ENCODE measurements at regions of chr3 and their contacts with region 1.

Region 1: DNA sequence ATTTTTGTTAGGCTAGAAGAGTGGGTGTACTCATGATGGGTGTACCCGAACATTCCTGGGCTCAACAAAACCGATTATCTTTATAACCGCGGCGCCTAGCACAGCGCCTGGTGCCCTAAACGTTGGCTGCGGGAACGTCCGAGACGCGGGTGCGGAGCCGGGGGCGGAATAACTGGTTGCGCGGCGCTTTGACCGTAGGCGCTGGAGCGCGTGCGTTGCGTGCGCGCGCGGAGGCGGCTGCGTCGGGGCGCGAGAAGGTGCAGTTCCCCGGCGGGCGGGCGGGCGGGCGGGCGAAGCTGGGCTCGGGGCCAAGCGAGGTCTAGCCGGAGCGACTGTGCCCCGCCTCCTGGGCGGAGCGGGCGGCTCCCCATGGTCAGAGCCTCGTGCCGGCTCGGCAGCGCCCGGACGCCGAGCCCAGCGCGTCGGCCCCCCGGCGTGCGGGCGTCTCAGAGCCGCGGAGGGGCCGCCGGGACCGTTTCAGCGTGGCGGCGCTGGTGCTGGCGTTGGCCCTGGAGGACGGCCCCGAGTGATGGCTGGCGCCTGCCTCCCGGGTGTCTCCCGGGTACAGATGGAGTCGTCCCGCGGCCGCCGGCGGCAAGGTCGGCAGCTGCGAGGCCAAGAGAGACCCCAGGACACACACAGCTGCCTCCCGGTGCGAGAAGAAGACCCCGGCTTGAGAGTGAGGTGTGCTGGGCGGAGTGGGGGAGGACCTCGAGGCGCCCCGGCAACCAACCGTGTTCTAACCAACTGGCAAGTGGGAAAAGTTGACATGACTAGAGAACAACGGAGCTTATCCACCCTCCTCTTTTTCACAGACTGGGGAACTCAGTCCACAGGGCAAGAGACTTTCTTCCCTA is at the start of gene PLAAT1:
- DNase-seq: peak; percentile 61 to 79
- ATAC-seq: peak; percentile 69 to 79
- H3K4me3 ChIP-seq: peak within 1 kb of the TSS; percentile 65 to 76 (median 72)
- H3K27ac ChIP-seq: peak within 1 kb of the TSS; percentile 96 to 98 (median 97)
- H3K4me1 ChIP-seq: peaks cover 16 to 31% of the 10 kb centered on the region in 2 donors
- H3K27me3 ChIP-seq: no peaks in the 10 kb centered on the region
- CTCF ChIP-seq: no peak
- POLR2A ChIP-seq: peak; percentile 82 to 87
- total RNA-seq, gene PLAAT1: 6.8 to 25.0 (median 18.8) TPM

Region 2: DNA sequence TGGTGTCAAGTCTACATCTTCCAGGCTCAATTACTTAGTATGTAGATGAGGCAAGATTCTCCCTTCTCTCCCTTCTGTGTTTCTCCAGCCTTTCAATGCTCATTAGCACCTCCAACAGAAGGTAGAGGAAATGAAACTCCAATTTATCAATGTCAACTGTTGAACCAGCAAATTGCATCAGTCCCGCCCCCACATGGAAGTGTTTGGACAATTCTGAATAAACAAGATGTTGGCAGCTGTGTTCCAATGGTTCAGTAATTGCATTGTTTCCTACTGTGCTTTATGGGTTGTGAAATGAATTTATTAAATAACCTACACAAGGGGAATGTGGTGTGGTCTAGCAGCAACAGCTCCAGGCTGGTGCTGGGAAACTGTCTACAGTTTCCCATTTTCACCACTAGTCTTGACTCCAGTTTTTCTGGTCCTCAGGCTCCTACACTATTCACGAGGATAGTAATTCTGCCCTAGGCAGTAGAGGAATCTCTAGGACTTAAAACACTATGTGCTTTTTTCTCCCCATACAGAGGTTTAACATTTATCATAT is 415.3 kb before region 1 on chr3:
- in situ Hi-C with region 1: no loop called
- intact Hi-C with region 1: loop called (anchors 2 kb)
- DNase-seq: no peak
- ATAC-seq: no peak
- H3K4me3 ChIP-seq: no peak overlapping the region
- H3K27ac ChIP-seq: no peak overlapping the region
- H3K4me1 ChIP-seq: peaks cover 23 to 27% of the 10 kb centered on the region in 2 donors
- H3K27me3 ChIP-seq: no peaks in the 10 kb centered on the region
- CTCF ChIP-seq: no peak
- POLR2A ChIP-seq: no peak

Region 3: DNA sequence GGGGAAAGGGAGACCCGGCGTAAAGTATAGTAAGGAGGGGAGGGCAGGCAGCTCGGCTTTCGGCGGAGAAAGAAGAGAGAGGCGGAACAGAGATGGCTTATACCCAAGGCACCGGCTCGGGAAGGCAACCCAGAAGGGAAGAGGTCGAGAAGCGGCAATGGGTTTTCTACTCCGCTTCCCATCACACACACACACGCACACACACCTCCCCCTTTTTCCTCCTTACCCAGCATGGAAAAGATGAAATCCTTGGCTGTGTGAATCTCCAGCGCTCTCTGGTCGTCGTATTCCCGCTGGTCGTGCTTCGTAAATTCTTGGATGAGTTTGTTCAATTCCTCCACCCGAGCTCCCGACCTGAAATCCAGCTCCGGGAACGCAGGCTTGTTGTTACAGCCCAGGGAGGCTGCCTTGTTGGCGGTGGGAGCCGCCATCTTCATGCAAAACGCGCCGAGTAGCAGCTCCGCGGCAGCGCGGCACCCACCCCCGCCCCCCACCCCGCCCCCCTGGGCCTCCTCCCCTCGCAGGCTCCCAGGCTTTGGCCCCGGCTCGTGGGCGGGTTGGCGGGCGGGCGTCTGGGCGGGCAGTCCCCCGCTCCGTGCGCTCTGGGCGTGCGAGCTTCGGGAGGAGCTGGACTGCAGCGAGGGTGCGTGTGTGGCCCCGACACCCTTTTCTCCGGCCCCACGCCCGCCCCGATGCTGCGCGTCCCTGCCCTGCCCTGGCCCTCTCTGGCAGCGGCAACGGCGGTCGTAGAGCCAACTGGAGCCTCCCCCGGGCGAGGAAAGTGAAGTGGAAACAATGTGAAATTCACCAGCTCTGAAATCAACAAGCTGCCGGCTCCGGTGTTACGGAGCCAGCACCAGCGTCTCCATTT is 323.4 kb before region 1 on chr3 and contains the start of gene MB21D2:
- in situ Hi-C with region 1: no loop called
- intact Hi-C with region 1: loop called (anchors 1 kb)
- DNase-seq: peak; percentile 34 to 45
- ATAC-seq: peak; percentile 75 to 80
- H3K4me3 ChIP-seq: peak within 1 kb of the TSS; percentile 74 to 92 (median 82)
- H3K27ac ChIP-seq: peak within 1 kb of the TSS; percentile 88 to 94 (median 90)
- H3K4me1 ChIP-seq: peaks cover 11 to 24% of the 10 kb centered on the region in 2 donors
- H3K27me3 ChIP-seq: no peaks in the 10 kb centered on the region
- CTCF ChIP-seq: no peak
- POLR2A ChIP-seq: peak; percentile 38 to 59
- total RNA-seq, gene MB21D2: 1.5 to 3.8 (median 2.7) TPM

Region 4: DNA sequence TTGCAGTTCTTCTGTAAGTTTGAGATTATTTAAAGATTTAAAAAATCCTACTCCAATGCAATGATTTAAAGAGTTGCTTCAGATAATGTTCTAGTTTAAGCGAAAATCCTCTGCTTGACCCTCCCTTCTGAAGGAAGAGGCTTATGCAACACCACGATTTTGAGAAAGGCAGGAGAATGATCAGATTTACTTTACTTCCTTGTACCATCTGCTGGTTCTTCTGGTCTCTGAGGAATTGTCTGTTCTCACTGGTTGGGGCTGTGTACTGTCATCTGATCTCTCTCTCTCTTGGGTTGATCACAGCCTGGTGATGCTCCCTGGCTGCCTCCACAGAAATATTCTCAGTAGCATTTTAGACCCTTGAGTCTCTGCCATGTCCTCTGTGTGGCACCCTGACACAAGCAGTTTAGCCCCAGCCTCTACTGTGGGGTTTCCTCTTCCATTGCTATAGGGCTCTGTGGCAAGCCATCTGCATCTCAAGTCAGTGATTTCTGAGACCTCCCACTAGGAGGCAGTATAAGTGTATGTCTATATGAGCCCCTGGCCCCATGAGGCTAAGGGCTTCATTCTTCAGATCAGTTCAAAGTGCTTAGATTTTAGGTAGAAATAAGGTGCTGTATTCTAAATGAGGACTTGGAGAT is 50.8 kb before region 1 on chr3:
- in situ Hi-C with region 1: no loop called
- intact Hi-C with region 1: loop called (anchors 5 kb)
- DNase-seq: peak in 1 of 2 donors; percentile 26
- ATAC-seq: peak; percentile 58 to 95
- H3K4me3 ChIP-seq: no peak overlapping the region
- H3K27ac ChIP-seq: no peak overlapping the region
- H3K4me1 ChIP-seq: peaks cover 0 to 5% of the 10 kb centered on the region in 2 donors
- H3K27me3 ChIP-seq: no peaks in the 10 kb centered on the region
- CTCF ChIP-seq: peak; percentile 32 to 55 (median 37)
- POLR2A ChIP-seq: no peak

Region 5: DNA sequence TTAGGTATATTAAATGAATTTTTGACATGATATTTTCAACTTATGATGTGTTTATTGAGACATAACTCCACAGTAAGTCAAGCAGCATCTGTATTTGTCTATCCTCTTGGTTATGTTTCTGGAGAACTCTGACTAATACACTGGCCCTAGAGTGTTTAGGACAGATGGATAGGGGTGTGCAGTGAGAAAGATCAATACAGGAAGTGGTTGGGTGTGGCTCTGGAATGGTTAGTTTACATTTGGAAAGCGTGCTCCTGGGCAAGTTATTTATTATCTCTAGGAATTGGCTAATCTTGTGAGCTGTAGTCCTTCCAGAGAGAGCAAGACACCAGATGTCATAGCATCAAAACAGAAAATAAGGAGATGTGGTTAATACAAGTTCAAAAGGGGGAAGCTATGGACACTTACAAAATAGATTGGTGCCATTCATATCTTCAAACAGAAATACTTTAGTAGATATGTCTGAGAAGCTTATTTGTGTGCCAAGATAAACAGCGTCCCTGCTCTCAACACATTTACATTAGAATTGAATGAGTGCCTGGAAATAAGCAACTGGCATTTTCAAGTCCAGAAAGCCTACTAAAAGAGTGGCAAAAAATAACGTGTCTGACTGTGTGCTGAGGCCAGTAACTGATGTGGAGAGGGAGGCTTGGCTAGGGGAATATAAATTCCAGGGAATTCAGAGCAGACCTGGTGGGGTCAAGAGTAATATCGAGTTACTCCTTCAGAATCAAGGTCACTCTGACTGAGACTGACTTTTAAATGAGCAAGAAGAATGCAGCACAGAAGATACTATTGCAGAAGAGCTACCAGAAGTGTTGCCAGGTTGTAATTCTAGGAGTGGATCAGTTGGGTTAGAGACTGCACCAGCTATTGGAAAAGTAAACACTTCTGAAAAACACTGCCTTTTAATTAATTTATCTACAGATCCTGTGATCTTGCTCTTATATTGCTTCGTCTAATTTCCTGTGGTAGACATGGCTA is 33.5 kb before region 1 on chr3:
- in situ Hi-C with region 1: no loop called
- intact Hi-C with region 1: loop called (anchors 5 kb)
- DNase-seq: no peak
- ATAC-seq: peak; percentile 92 to 94
- H3K4me3 ChIP-seq: no peak overlapping the region
- H3K27ac ChIP-seq: peak overlapping the region; percentile 21 to 48 (median 28)
- H3K4me1 ChIP-seq: peaks cover 15 to 32% of the 10 kb centered on the region in 2 donors
- H3K27me3 ChIP-seq: no peaks in the 10 kb centered on the region
- CTCF ChIP-seq: no peak
- POLR2A ChIP-seq: no peak

Region 6: GRCh38 chr3:193592944-193593667 is 352.0 kb after region 1 on chr3 and contains the start of gene OPA1:
- in situ Hi-C with region 1: no loop called
- intact Hi-C with region 1: loop called (anchors 2 kb)
- DNase-seq: peak; percentile 95 to 97
- ATAC-seq: peak; percentile 96 to 97
- H3K4me3 ChIP-seq: peak within 1 kb of the TSS; percentile 87 to 98 (median 96)
- H3K27ac ChIP-seq: peak within 1 kb of the TSS; percentile 94 to 95 (median 95)
- H3K4me1 ChIP-seq: peaks cover 22% of the 10 kb centered on the region in 2 donors
- H3K27me3 ChIP-seq: no peaks in the 10 kb centered on the region
- CTCF ChIP-seq: peak in 4 of 5 experiments; percentile 27 to 49 (median 32)
- POLR2A ChIP-seq: peak; percentile 60 to 73
- total RNA-seq, gene OPA1: 59.8 to 78.2 (median 72.2) TPM